ENCODE measurements at regions of chr1 and their contacts with region 1.

Region 1: DNA sequence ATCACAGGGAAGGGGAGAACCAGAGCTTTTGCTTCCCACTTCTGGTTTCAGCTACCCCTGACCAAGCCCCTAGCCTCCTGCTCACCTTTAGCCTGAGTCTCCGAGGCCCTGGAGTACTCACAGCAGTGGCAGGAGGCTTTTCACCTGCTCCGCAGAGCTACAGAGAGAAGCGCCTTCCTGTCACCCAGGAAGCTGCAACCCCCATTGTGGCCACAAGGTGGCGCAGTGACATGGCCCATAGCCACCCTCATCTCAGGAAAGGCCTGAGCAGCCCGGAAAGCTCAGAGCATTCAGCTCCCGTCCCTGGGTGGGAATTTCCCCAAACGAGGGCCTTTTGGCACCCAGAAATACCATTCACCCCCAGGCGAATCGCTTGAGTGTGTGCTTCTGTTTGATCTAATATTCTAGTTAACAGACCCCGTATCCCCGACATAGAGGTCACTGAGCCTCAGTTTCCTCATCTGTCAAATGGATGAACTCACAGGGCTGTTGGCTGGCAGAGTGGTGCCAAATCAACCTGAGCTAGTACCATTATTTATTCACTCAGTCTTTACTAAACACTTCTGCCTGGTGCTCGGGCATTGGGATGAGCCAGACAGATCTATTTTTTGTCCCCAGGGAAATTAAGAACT is 25.3 kb downstream of the A3GALT2 start:
- DNase-seq: peak; percentile 49
- H3K4me3 ChIP-seq: no peak overlapping the region
- H3K27ac ChIP-seq: no peak overlapping the region
- H3K27me3 ChIP-seq: no peaks in the 10 kb centered on the region
- CTCF ChIP-seq: peak; percentile 96

Region 2: GRCh38 chr1:32964461-32965250 is 330.9 kb before region 1 on chr1 and contains the start of gene RNF19B:
- CTCF ChIA-PET with region 1: no interaction called
- POLR2A ChIA-PET with region 1: no interaction called
- DNase-seq: peak; percentile 71
- H3K4me3 ChIP-seq: peak within 1 kb of the TSS; percentile 84
- H3K27ac ChIP-seq: peak within 1 kb of the TSS; percentile 25
- H3K27me3 ChIP-seq: no peaks in the 10 kb centered on the region
- CTCF ChIP-seq: no peak
- polyA plus RNA-seq, gene RNF19B: 8.5 and 10.1 TPM in 2 replicates

Region 3: DNA sequence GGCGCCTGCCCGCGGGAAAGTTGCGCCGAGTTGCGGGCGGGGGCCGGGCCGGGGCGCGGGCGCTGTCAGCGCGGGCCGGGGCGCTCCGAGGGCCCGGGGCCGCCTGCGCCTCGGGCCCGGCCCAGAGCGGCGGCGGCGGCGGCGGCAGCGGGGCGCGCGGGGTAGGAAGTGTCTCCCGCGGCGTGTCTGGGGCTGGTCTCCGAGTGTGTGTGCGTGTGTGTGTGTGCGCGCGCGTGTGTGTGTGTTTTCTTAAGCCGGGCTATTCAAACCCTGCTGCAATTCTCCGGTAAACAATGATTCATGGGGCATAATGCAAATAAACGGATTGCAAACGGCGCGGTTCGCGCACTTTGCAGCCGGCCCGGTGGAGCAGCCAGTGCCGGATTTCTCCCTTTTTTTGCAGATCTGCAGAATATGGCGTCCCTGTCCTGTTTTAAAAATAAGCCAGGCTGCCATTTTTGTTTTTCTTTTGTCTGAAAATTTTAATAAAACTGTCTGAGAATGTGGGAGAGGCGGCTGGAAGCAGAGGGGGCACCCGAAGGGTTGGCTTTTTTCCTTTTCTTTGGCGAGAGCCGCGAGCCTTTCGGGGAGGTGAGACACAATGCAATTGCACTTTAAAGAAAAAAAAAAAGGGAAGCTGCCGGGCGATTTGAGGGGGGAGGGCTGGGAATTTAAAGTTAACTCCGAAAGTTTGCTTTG is 38.7 kb before region 1 on chr1:
- CTCF ChIA-PET with region 1: interaction called, 12 read pairs
- POLR2A ChIA-PET with region 1: no interaction called
- DNase-seq: peak; percentile 64
- H3K4me3 ChIP-seq: peak overlapping the region; percentile 71
- H3K27ac ChIP-seq: peak overlapping the region; percentile 93
- H3K27me3 ChIP-seq: no peaks in the 10 kb centered on the region
- CTCF ChIP-seq: no peak

Region 4: GRCh38 chr1:33306648-33307493 is 11.3 kb after region 1 on chr1:
- CTCF ChIA-PET with region 1: interaction called, 27 read pairs
- POLR2A ChIA-PET with region 1: no interaction called
- DNase-seq: no peak
- H3K4me3 ChIP-seq: no peak overlapping the region
- H3K27ac ChIP-seq: no peak overlapping the region
- H3K27me3 ChIP-seq: no peaks in the 10 kb centered on the region
- CTCF ChIP-seq: no peak

Region 5: DNA sequence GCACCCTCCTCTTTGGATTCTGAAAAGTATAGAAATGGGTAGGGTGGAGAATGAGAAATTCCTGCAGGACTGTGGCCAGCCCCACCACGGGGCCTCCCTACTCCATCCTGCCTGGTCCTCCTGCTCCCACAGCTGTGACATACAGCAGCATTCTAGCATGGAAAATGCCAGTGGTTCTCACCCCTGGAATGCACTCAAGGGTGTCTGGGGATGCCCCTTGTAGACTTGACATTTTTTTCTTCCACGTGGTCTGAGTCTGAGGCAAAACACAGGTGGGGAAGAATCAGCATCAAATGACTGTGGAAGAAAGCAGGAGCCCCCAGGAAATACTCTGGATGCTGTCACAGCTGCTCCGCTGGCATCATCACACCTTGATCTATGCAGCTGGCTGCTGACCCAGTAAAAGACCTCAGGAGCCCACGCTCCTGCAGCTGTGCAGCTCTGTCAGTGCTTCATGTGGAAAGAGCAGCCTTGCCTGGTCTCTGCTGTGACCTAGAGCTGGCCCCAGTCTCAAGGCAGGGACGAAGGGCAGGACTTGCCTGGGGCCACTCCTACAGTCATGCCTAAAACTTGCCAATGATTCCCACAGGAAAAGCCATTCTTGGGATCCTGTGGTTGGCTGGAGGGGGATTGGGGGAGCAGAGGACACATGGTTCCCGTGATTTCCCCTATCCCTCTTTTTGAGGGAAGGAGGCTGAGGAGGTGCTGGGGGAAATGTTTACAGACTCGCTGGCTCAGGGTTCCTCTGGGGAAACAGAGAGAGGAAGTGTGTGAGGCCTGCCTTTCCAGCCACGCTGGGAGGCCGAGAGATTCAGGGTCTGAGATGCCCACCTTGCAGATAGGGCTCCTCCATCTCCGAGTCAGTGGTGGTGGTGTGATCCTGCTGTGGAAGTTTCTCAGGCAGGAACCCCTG is 36.1 kb after region 1 on chr1:
- CTCF ChIA-PET with region 1: interaction called, 10 read pairs
- POLR2A ChIA-PET with region 1: no interaction called
- DNase-seq: no peak
- H3K4me3 ChIP-seq: no peak overlapping the region
- H3K27ac ChIP-seq: peak overlapping the region; percentile 11
- H3K27me3 ChIP-seq: no peaks in the 10 kb centered on the region
- CTCF ChIP-seq: no peak

Region 6: GRCh38 chr1:33367485-33368405 is 72.2 kb after region 1 on chr1:
- CTCF ChIA-PET with region 1: interaction called, 51 read pairs
- POLR2A ChIA-PET with region 1: no interaction called
- DNase-seq: no peak
- H3K4me3 ChIP-seq: no peak overlapping the region
- H3K27ac ChIP-seq: no peak overlapping the region
- H3K27me3 ChIP-seq: no peaks in the 10 kb centered on the region
- CTCF ChIP-seq: peak; percentile 97

Region 7: DNA sequence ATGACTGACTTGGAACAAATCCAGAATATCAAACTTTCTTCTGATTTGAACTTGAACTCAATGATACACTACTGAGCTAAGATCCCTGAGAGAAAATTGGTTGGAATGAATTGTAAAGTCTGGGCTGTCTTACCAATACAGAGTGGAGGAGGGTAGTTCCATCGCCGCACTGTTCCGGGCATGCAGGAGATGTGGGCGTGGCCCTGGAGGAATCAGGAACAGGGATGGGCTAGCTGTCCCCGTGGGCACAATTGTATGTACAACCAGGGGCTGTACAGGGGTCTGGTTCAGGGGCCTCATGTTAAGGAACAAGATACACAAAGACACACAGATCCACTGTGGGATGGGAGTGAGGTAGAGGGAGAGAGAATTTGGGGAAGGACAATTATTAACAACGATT is 321.2 kb after region 1 on chr1:
- CTCF ChIA-PET with region 1: interaction called, 45 read pairs
- POLR2A ChIA-PET with region 1: no interaction called
- DNase-seq: no peak
- H3K4me3 ChIP-seq: no peak overlapping the region
- H3K27ac ChIP-seq: no peak overlapping the region
- H3K27me3 ChIP-seq: no peaks in the 10 kb centered on the region
- CTCF ChIP-seq: no peak